OCI-LY7 (cell line): ENCODE measurements at regions of chr9 and their contacts with region 1.

Region 1: DNA sequence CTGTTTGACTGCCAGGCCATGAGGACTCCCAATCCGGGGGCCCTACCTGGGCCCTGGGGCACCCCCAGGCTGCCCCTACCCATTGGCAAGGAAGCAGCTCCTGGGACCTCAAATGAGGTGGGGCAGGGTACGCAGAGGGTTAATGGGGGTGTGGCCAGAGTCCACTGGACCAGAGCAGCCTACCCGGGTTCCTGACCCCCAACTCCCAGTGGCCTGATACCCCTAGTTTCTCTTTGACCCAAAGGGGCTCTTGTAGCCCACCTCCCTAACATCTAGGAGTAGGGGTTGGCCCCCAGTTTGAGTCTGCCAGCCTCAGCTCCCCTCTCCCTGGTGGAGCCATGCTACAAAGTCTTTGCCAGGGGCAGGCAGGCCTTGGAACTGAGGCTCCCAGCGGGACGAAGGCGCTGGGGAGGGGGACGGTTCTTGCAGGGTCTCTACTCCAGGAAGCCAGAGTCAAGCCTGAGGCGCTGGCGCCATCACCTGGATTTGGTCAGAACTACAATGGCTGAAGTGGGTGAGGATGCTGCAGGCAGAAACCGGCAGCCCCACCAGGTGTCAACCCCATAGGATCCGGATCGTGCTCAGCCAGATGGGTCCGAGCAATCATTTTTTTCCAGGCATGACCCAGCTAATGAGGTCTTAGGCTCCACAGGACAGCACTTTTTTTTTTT is 8.4 kb upstream of the CERCAM start:
- DNase-seq: peak; percentile 67
- H3K4me3 ChIP-seq: no peak overlapping the region
- H3K27ac ChIP-seq: no peak overlapping the region
- H3K4me1 ChIP-seq: peaks cover 10% of the 10 kb centered on the region
- CTCF ChIP-seq: peak; percentile 85

Region 2: DNA sequence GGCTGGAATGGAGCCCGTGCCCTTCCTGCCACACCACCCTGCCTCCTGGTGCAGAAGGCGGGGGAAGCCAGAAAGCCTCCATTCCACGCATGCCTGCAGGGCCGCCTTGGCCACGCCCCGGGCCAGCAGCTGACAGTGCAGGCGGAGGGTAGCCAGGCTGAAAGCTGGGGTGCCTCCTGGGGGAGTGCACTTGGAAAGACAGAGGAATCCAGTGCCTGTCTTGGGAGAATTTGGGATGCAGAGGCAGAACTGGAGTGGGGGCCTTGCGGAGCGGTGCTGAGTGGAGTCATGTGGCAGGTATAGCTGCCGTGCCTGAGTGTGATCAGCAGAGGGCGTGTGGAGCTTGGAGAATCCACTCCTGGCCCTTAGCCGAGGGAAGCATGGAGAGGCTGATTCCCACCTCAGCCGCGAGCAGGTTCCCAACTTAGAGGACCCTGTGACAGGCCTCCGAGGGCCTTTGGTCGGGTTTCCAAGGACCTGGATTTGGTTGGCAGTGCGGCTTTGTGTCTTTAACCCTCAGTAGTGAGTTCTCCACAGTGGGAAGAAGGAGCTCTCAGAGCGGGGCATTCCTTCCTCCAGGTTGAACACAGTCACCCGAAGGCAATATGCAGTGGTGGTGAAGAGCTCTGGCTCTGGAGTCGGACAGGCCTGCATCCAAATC is 50.1 kb before region 1 on chr9:
- CTCF ChIA-PET with region 1: no interaction called
- POLR2A ChIA-PET with region 1: interaction called, 3 read pairs
- intact Hi-C with region 1: loop called (anchors 1 kb)
- DNase-seq: peak; percentile 73
- H3K4me3 ChIP-seq: no peak overlapping the region
- H3K27ac ChIP-seq: no peak overlapping the region
- H3K4me1 ChIP-seq: no peaks in the 10 kb centered on the region
- CTCF ChIP-seq: peak; percentile 89